Thyroid gland (tissue), 4 donors: ENCODE measurements at regions of chr6 and their contacts with region 1.

Region 1: DNA sequence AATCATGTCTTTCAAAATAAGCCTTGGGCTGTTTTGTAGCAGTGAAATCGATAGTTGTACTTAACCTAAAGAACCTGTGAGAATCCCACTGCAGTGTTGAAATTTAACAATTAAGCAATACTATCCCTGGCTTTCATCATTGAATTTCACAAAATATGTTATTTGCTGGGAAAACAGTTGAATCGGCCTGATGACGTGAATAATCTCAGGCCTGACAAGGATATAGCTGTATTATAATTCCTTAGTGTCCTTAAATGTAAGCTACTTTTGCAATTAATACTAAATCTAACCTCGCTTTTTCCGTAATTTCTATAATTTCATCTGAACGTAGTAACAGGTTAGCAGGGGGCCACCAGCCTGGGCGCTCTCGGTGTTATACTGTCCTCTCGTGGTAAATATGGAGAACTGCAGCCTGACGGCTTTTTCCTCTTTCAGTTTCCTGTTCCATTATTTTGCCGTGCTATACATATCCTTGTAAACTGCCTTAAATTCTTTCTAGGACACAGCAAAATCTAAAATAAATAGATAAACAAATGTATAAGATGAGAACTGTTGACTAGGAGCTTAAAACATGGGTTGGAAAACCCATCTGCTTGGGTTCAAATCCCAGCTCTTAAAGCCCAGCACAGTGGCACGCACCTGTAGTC is 24.0 kb downstream of the MTFR2 start:
- DNase-seq: peak; percentile 42 to 49
- H3K4me3 ChIP-seq: no peak overlapping the region
- H3K27ac ChIP-seq: no peak overlapping the region
- H3K4me1 ChIP-seq: peaks cover 0 to 4% of the 10 kb centered on the region in 2 donors
- H3K27me3 ChIP-seq: no peaks in the 10 kb centered on the region
- CTCF ChIP-seq: peak; percentile 99 to 100 (median 100)
- POLR2A ChIP-seq: no peak

Region 2: DNA sequence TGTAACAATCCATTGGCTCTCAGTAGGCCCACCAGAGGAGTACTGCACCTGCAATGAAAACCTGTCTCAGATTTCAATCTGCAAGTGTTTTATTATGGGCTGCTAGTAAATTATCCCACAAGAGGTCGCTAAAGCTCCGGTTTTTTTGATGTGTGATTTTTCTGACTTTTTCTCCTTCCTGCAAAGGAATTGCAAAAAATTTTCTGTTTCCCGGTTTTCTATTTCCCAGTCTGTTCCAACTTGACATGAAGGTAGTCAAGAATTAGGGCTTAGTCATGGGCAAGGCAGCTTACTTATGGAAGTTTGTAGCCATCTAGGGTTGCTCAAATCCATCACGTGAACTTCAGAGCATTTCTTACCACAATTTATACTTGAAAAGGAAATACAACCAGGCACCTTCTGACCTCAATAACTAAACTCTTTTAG is 690.1 kb before region 1 on chr6:
- intact Hi-C with region 1: loop called (anchors 5 kb)
- DNase-seq: no peak
- H3K4me3 ChIP-seq: no peak overlapping the region
- H3K27ac ChIP-seq: no peak overlapping the region
- H3K4me1 ChIP-seq: peaks cover 0 to 3% of the 10 kb centered on the region in 2 donors
- H3K27me3 ChIP-seq: no peaks in the 10 kb centered on the region
- CTCF ChIP-seq: peak; percentile 27 to 64 (median 54)
- POLR2A ChIP-seq: no peak

Region 3: DNA sequence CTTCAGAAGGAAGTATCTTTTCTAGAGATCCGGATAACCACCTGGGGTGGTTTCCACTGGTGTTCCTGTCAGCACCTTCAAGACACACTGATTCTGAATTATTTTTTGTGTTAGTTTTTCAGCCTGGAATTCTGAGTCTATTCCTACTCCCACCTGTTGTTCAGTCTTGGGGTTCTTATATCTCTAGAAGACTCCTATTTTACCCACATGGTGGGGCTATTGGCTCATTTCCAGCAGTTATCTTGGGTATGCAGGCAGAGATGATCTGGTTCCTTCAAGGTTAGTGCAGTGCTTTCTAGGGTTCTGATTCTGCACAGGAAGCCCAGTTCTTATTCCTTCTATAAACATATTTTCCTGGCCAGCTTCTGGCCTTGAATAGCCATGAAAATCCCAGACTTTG is 550.3 kb before region 1 on chr6:
- intact Hi-C with region 1: no loop called
- DNase-seq: no peak
- H3K4me3 ChIP-seq: no peak overlapping the region
- H3K27ac ChIP-seq: no peak overlapping the region
- H3K4me1 ChIP-seq: no peaks in the 10 kb centered on the region
- H3K27me3 ChIP-seq: no peaks in the 10 kb centered on the region
- CTCF ChIP-seq: no peak
- POLR2A ChIP-seq: no peak